ENCODE measurements at regions of chr10 and their contacts with region 1.

Region 1: GRCh38 chr10:88379575-88379974 is 203.5 kb downstream of the RNLS start:
- DNase-seq: no peak
- H3K4me3 ChIP-seq: no peak overlapping the region
- H3K27ac ChIP-seq: no peak overlapping the region
- H3K4me1 ChIP-seq: peaks cover 15% of the 10 kb centered on the region
- CTCF ChIP-seq: no peak

Region 2: GRCh38 chr10:87740232-87740631 is 639.3 kb before region 1 on chr10:
- CTCF ChIA-PET with region 1: no interaction called
- POLR2A ChIA-PET with region 1: no interaction called
- intact Hi-C with region 1: no loop called
- DNase-seq: no peak
- H3K4me3 ChIP-seq: no peak overlapping the region
- H3K27ac ChIP-seq: no peak overlapping the region
- H3K4me1 ChIP-seq: no peaks in the 10 kb centered on the region
- CTCF ChIP-seq: no peak

Region 3: GRCh38 chr10:88343761-88344484 is 35.7 kb before region 1 on chr10:
- CTCF ChIA-PET with region 1: no interaction called
- POLR2A ChIA-PET with region 1: interaction called, 9 read pairs
- intact Hi-C with region 1: loop called (anchors 5 kb)
- DNase-seq: no peak
- H3K4me3 ChIP-seq: no peak overlapping the region
- H3K27ac ChIP-seq: no peak overlapping the region
- H3K4me1 ChIP-seq: peaks cover 27% of the 10 kb centered on the region
- CTCF ChIP-seq: no peak

Region 4: DNA sequence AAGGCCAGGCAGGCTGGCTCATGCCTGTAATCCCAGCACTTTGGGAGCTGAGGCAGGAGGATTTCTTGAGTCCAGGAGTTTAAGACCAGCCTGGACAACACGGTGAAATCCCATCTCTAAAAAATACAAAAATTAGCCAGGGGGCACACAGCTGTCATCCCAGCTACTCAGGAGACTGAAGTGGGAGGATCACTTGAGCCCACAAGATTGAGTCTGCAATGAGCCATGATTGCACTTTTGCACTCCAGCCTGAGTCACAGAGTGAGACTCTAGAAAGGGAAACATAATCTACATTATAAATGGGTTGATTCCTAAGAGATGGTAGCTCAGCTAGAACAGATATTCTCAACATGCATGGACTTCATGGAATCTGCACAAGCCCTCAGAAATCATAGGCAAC is 278.3 kb after region 1 on chr10:
- CTCF ChIA-PET with region 1: no interaction called
- POLR2A ChIA-PET with region 1: no interaction called
- intact Hi-C with region 1: no loop called
- DNase-seq: no peak
- H3K4me3 ChIP-seq: no peak overlapping the region
- H3K27ac ChIP-seq: no peak overlapping the region
- H3K4me1 ChIP-seq: no peaks in the 10 kb centered on the region
- CTCF ChIP-seq: no peak

Region 5: DNA sequence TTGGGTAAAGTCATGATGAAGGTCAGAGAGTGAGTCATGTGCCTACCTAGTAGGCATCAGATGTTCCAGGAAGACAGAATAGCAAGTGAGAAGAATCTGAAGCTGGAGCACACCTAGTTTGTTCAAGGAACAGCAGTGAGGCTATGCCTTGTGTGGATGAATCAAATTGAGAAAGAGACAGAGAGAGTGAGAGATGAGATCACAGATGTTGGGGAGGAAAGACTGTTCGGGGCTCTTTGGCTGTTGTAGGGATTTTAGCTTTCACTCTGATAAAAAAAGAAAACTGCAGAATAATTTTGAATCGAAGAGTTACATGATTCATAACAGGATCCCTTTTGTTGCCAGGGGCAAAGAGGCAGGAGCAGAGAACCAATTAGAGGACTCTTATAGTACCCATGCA is 290.9 kb after region 1 on chr10:
- CTCF ChIA-PET with region 1: no interaction called
- POLR2A ChIA-PET with region 1: no interaction called
- intact Hi-C with region 1: no loop called
- DNase-seq: no peak
- H3K4me3 ChIP-seq: no peak overlapping the region
- H3K27ac ChIP-seq: no peak overlapping the region
- H3K4me1 ChIP-seq: no peaks in the 10 kb centered on the region
- CTCF ChIP-seq: no peak